ENCODE measurements at regions of chr11 and their contacts with region 1.

Region 1: GRCh38 chr11:65888163-65888814 is at the start of gene FIBP:
- DNase-seq: peak; percentile 97
- H3K4me3 ChIP-seq: peak within 1 kb of the TSS; percentile 54 to 58
- H3K27ac ChIP-seq: peak within 1 kb of the TSS; percentile 89 to 93
- H3K4me1 ChIP-seq: peaks cover 17% of the 10 kb centered on the region
- H3K27me3 ChIP-seq: no peaks in the 10 kb centered on the region
- CTCF ChIP-seq: peak; percentile 83 to 99 (median 96)
- POLR2A ChIP-seq: peak; percentile 80
- total RNA-seq, gene FIBP: 87.7 to 151 TPM

Region 2: GRCh38 chr11:65859200-65859811 is 29.0 kb before region 1 on chr11:
- intact Hi-C with region 1: loop called (anchors 2 kb)
- DNase-seq: peak; percentile 99
- H3K4me3 ChIP-seq: peak overlapping the region; percentile 99
- H3K27ac ChIP-seq: peak overlapping the region; percentile 94 to 96
- H3K4me1 ChIP-seq: peaks cover 12% of the 10 kb centered on the region
- H3K27me3 ChIP-seq: no peaks in the 10 kb centered on the region
- CTCF ChIP-seq: peak in 1 of 4 experiments; percentile 32
- POLR2A ChIP-seq: peak; percentile 87

Region 3: GRCh38 chr11:65961232-65961901 is 73.1 kb after region 1 on chr11 and contains the start of gene SART1:
- intact Hi-C with region 1: loop called (anchors 2 kb)
- DNase-seq: peak; percentile 96
- H3K4me3 ChIP-seq: peak within 1 kb of the TSS; percentile 89 to 100
- H3K27ac ChIP-seq: peak within 1 kb of the TSS; percentile 74 to 81
- H3K4me1 ChIP-seq: peaks cover 12% of the 10 kb centered on the region
- H3K27me3 ChIP-seq: no peaks in the 10 kb centered on the region
- CTCF ChIP-seq: peak in 2 of 4 experiments; percentile 26 to 31
- POLR2A ChIP-seq: peak; percentile 48
- total RNA-seq, gene SART1: 36.7 to 76.6 TPM

Region 4: GRCh38 chr11:65988791-65989592 is 100.7 kb after region 1 on chr11:
- intact Hi-C with region 1: loop called (anchors 2 kb)
- DNase-seq: peak; percentile 93
- H3K4me3 ChIP-seq: no peak overlapping the region
- H3K27ac ChIP-seq: no peak overlapping the region
- H3K4me1 ChIP-seq: no peaks in the 10 kb centered on the region
- H3K27me3 ChIP-seq: no peaks in the 10 kb centered on the region
- CTCF ChIP-seq: peak; percentile 45 to 99 (median 93)
- POLR2A ChIP-seq: no peak